OCI-LY7 (cell line): ENCODE measurements at regions of chr15 and their contacts with region 1.

Region 1: DNA sequence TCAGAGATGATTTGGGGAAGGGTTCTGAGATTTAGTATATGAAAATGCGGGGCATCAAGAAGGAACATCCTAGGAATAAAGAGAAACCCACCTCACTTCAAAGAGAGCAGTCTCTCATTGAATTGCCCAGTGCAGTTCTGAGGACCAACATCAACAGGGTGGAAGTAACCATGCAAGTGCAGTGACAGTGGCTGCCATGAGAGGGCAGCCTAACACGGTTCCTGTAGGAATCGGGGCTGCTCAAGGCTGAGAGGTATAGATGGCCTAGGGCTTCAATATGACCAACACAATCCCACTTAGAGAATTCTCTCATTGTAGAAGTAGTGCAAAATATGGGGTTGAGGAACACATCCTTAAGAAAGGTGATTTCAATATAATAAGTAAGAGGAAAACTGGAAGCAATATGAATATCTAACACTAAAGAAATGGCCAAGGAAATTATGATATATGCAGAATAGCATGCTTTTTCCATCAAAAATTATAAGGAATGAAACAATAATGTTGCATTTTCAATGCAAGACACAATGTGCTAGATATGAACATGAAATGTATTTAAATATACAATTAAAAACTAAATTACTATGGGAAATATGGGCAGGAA is 51.1 kb upstream of the ARRDC4 start:
- DNase-seq: peak; percentile 51
- H3K4me3 ChIP-seq: no peak overlapping the region
- H3K27ac ChIP-seq: no peak overlapping the region
- H3K4me1 ChIP-seq: no peaks in the 10 kb centered on the region
- CTCF ChIP-seq: peak; percentile 88

Region 2: DNA sequence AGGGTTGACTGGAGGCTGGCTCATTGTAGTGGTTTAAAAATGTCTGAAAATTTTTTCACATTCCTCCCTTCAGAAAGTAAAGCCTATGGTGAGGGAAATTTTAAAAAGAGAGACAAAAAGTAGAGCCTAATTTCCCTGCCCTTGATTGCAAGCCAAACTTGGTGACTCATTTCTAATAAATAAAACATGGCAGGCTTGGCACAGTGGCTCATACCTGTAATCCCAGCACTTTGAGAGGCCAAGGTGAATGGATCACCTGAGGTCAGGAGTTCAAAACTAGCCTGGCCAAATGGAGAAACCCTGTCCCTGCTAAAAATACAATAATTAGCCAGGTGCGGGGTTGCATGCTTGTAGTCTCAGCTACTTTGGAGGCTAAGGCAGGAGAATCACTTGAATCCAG is 32.2 kb after region 1 on chr15:
- CTCF ChIA-PET with region 1: no interaction called
- POLR2A ChIA-PET with region 1: no interaction called
- intact Hi-C with region 1: no loop called
- DNase-seq: no peak
- H3K4me3 ChIP-seq: no peak overlapping the region
- H3K27ac ChIP-seq: no peak overlapping the region
- H3K4me1 ChIP-seq: no peaks in the 10 kb centered on the region
- CTCF ChIP-seq: no peak

Region 3: DNA sequence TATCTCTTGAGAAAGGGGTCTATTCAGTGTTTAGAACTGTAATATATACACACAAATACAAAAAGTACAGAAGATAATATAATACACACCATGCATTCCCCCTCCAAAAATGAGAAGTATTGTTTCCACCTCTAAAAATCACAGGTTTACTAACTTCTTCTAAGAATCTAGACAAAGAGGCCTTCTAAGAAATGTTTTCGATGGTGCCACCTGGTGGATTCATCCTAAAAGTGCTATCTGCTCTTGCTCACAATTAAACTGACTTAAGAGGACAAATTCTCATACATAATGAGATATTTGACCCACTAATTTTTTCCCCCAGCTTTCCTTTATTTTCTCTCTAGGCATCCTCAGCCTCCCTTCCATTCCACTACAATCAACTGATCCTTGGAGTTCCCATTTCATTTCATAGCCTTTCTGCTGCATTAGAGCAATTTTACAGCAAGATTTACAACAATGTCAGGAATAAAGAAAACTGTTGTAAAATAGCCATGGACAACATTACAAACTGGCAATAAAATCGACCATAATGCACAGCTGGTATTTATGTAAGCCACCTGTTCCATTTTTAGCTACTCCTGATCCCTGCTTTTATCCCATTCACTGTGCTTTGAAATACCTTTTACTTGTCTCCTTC is 175.7 kb after region 1 on chr15:
- CTCF ChIA-PET with region 1: no interaction called
- POLR2A ChIA-PET with region 1: no interaction called
- intact Hi-C with region 1: loop called (anchors 2 kb)
- DNase-seq: peak; percentile 48
- H3K4me3 ChIP-seq: no peak overlapping the region
- H3K27ac ChIP-seq: no peak overlapping the region
- H3K4me1 ChIP-seq: no peaks in the 10 kb centered on the region
- CTCF ChIP-seq: peak; percentile 84

Region 4: DNA sequence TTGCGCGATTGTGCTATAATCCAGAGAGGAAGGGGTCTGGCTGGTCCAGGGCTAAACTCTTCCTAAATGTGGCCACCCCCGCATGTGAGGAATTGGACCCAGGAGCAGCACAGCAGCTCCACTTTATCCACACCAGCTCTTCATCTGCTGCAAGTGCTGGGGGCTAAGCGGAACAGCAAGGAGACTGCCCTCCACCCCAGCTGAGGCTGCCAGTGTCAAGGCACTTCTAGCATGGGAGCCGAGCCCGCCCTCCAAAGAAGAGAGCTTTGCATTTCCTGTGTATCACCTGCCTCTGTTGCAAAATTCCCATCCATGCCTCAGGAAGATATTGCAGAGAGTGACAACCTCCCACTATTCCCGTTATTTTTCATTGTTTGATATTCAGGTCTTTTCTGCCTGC is 384.7 kb after region 1 on chr15:
- CTCF ChIA-PET with region 1: no interaction called
- POLR2A ChIA-PET with region 1: no interaction called
- intact Hi-C with region 1: loop called (anchors 2 kb)
- DNase-seq: no peak
- H3K4me3 ChIP-seq: no peak overlapping the region
- H3K27ac ChIP-seq: no peak overlapping the region
- H3K4me1 ChIP-seq: no peaks in the 10 kb centered on the region
- CTCF ChIP-seq: no peak